ENCODE measurements at regions of chr7 and their contacts with region 1.

Region 1: GRCh38 chr7:51045319-51046102 is 262.8 kb upstream of the GRB10 start:
- DNase-seq: no peak
- H3K4me3 ChIP-seq: no peak overlapping the region
- H3K27ac ChIP-seq: no peak overlapping the region
- H3K4me1 ChIP-seq: no peaks in the 10 kb centered on the region
- H3K27me3 ChIP-seq: peaks cover 8 to 9% of the 10 kb centered on the region in 2 experiments
- CTCF ChIP-seq: no peak
- POLR2A ChIP-seq: no peak

Region 2: DNA sequence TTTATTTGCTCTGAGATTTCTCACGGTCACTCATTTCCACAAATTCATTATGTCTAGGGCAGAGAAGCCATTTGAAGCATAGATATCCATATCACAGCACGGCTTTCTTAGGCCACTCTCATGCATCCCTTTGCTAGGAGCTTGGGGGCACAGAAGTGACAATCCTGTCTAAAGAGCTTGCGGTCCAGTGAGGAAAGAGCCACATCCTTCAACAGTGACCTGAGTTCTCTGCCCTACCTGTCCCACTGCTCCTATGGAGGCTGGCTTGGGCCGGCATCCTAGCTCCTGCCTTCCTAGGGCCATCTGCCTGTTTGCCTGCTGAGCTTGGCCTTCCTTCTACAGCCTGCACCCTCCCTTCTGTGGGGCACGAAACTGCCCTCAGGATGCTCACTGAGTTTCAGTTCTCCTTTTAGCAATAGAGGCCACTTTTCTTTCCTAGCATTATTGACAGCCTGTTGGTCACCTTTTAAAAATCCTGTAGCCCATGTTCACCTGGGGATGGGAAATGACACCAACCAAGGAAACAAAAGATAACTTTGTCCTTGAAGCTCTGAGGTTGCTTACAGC is 50.7 kb before region 1 on chr7:
- CTCF ChIA-PET with region 1: no interaction called
- POLR2A ChIA-PET with region 1: no interaction called
- dilution Hi-C with region 1: no loop called
- intact Hi-C with region 1: loop called (anchors 5 kb)
- DNase-seq: no peak
- H3K4me3 ChIP-seq: no peak overlapping the region
- H3K27ac ChIP-seq: no peak overlapping the region
- H3K4me1 ChIP-seq: no peaks in the 10 kb centered on the region
- H3K27me3 ChIP-seq: no peaks in the 10 kb centered on the region
- CTCF ChIP-seq: no peak
- POLR2A ChIP-seq: no peak

Region 3: GRCh38 chr7:51255536-51256208 is 210.2 kb after region 1 on chr7:
- CTCF ChIA-PET with region 1: no interaction called
- POLR2A ChIA-PET with region 1: no interaction called
- dilution Hi-C with region 1: no loop called
- intact Hi-C with region 1: no loop called
- DNase-seq: no peak
- H3K4me3 ChIP-seq: no peak overlapping the region
- H3K27ac ChIP-seq: no peak overlapping the region
- H3K4me1 ChIP-seq: no peaks in the 10 kb centered on the region
- H3K27me3 ChIP-seq: no peaks in the 10 kb centered on the region
- CTCF ChIP-seq: no peak
- POLR2A ChIP-seq: no peak